Activated naive CD4-positive, alpha-beta T cell treated with anti-CD3 and anti-CD28 coated beads for 36 hours (primary cell): ENCODE measurements at regions of chr7 and their contacts with region 1.

Region 1: DNA sequence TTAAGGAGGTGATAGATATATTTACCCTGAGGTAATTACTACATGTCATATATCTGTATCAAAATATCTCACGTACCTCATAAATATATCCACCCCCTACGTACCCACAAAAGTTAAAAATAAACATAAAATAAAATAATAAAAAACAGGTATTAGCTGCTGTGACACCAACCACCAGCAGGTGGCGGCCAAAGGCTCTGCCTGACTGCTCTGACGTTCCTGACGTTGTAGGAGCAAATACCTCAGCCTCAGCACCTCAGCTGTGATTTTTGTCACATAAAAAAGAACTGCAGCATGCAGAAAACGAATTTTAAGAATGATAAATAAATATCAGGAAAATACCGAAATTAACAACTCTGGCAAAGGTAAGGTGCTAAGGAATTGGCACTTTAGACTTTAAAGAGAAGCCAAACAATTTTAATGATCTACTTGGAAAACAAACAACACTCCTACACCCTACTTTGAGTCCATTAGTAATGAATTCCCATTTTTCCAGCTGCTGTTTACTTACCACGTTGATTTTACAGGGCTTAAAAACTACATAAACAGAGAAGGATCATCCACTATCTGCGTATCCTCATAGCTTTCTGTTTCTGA is 125.4 kb upstream of the TARP start:
- DNase-seq: peak; percentile 62
- H3K4me3 Mint-ChIP-seq: no peak overlapping the region
- H3K27ac Mint-ChIP-seq: no peak overlapping the region
- H3K4me1 Mint-ChIP-seq: peaks cover 2% of the 10 kb centered on the region
- H3K27me3 Mint-ChIP-seq: peaks cover 3% of the 10 kb centered on the region

Region 2: GRCh38 chr7:38245409-38245977 is 153.3 kb before region 1 on chr7:
- CTCF ChIA-PET with region 1: no interaction called
- intact Hi-C with region 1: no loop called
- DNase-seq: no peak
- H3K4me3 Mint-ChIP-seq: no peak overlapping the region
- H3K27ac Mint-ChIP-seq: no peak overlapping the region
- H3K4me1 Mint-ChIP-seq: no peaks in the 10 kb centered on the region
- H3K27me3 Mint-ChIP-seq: no peaks in the 10 kb centered on the region

Region 3: DNA sequence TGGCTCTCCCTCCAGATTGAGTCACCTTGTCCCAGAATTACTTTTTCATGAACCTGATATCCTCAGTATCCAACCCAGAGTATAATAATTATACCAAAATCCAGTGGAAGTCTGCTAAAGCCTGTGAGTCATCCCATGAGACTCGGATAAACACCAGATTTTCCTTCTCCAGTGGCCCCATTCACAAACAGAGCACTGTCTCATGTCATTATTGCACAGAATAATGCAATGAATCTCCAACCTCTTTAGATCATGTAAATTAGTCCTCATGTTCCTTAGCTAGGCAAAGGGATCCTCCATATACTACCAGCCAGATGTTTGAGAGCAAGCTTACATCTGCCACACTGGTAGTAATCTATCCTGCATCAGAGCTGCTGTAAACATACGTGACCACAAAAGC is 143.3 kb after region 1 on chr7:
- CTCF ChIA-PET with region 1: interaction called, 3 read pairs
- intact Hi-C with region 1: loop called (anchors 5 kb)
- DNase-seq: no peak
- H3K4me3 Mint-ChIP-seq: no peak overlapping the region
- H3K27ac Mint-ChIP-seq: no peak overlapping the region
- H3K4me1 Mint-ChIP-seq: peaks cover 7% of the 10 kb centered on the region
- H3K27me3 Mint-ChIP-seq: no peaks in the 10 kb centered on the region

Region 4: GRCh38 chr7:38660427-38661099 is 261.7 kb after region 1 on chr7:
- CTCF ChIA-PET with region 1: interaction called, 28 read pairs
- intact Hi-C with region 1: loop called (anchors 1 kb)
- DNase-seq: peak; percentile 43
- H3K4me3 Mint-ChIP-seq: no peak overlapping the region
- H3K27ac Mint-ChIP-seq: no peak overlapping the region
- H3K4me1 Mint-ChIP-seq: no peaks in the 10 kb centered on the region
- H3K27me3 Mint-ChIP-seq: peaks cover 13% of the 10 kb centered on the region

Region 5: GRCh38 chr7:39465055-39465929 is 1066.5 kb after region 1 on chr7:
- CTCF ChIA-PET with region 1: interaction called, 3 read pairs
- intact Hi-C with region 1: loop called (anchors 2 kb)
- DNase-seq: peak; percentile 75
- H3K4me3 Mint-ChIP-seq: no peak overlapping the region
- H3K27ac Mint-ChIP-seq: no peak overlapping the region
- H3K4me1 Mint-ChIP-seq: peaks cover 2% of the 10 kb centered on the region
- H3K27me3 Mint-ChIP-seq: peaks cover 13% of the 10 kb centered on the region